Naive thymus-derived CD4-positive, alpha-beta T cell (primary cell): ENCODE measurements at regions of chr1 and their contacts with region 1.

Region 1: GRCh38 chr1:221117548-221117951 is 238.3 kb downstream of the HLX start:
- DNase-seq: no peak
- ATAC-seq: no peak
- H3K4me3 ChIP-seq: no peak overlapping the region
- H3K4me3 Mint-ChIP-seq: no peak overlapping the region
- H3K27ac ChIP-seq: no peak overlapping the region
- H3K27ac Mint-ChIP-seq: no peak overlapping the region
- H3K4me1 ChIP-seq: no peaks in the 10 kb centered on the region
- H3K4me1 Mint-ChIP-seq: no peaks in the 10 kb centered on the region
- H3K27me3 ChIP-seq: no peaks in the 10 kb centered on the region
- H3K27me3 Mint-ChIP-seq: peaks cover 0 to 18% (median 9%) of the 10 kb centered on the region in 5 donors

Region 2: DNA sequence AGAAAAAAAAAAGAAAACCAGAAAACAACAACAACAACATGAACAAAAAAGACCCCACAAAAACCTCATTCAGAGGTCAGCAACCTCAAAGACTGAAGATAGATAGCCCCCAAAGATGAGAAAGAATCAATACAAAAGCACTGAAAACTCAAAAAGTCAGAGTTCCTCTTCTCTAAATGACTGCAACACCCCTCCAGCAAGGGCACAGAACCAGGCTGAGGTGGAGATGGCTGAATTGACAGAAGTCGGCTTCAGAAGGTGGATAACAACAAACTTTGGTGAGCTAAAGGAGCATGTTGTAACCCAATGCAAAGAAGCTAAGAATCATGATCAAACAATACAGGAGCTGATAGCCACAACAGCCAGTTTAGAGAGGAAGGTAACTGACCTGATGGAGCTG is 862.3 kb before region 1 on chr1:
- CTCF ChIA-PET with region 1: no interaction called
- POLR2A ChIA-PET with region 1: no interaction called
- intact Hi-C with region 1: no loop called
- DNase-seq: no peak
- ATAC-seq: no peak
- H3K4me3 ChIP-seq: no peak overlapping the region
- H3K4me3 Mint-ChIP-seq: no peak overlapping the region
- H3K27ac ChIP-seq: no peak overlapping the region
- H3K27ac Mint-ChIP-seq: peak overlapping the region in 2 of 9 donors; percentile 2 to 46
- H3K4me1 ChIP-seq: no peaks in the 10 kb centered on the region
- H3K4me1 Mint-ChIP-seq: peaks cover 26 to 51% (median 43%) of the 10 kb centered on the region in 7 donors
- H3K27me3 ChIP-seq: no peaks in the 10 kb centered on the region
- H3K27me3 Mint-ChIP-seq: no peaks in the 10 kb centered on the region

Region 3: GRCh38 chr1:220974431-220974830 is 143.1 kb before region 1 on chr1:
- CTCF ChIA-PET with region 1: no interaction called
- POLR2A ChIA-PET with region 1: no interaction called
- intact Hi-C with region 1: no loop called
- DNase-seq: no peak
- ATAC-seq: no peak
- H3K4me3 ChIP-seq: no peak overlapping the region
- H3K4me3 Mint-ChIP-seq: no peak overlapping the region
- H3K27ac ChIP-seq: no peak overlapping the region
- H3K27ac Mint-ChIP-seq: no peak overlapping the region
- H3K4me1 ChIP-seq: no peaks in the 10 kb centered on the region
- H3K4me1 Mint-ChIP-seq: no peaks in the 10 kb centered on the region
- H3K27me3 ChIP-seq: no peaks in the 10 kb centered on the region
- H3K27me3 Mint-ChIP-seq: peaks cover 0 to under 1% (median 0%) of the 10 kb centered on the region in 5 donors

Region 4: GRCh38 chr1:221011145-221011544 is 106.4 kb before region 1 on chr1:
- CTCF ChIA-PET with region 1: no interaction called
- POLR2A ChIA-PET with region 1: no interaction called
- intact Hi-C with region 1: no loop called
- DNase-seq: no peak
- ATAC-seq: no peak
- H3K4me3 ChIP-seq: no peak overlapping the region
- H3K4me3 Mint-ChIP-seq: no peak overlapping the region
- H3K27ac ChIP-seq: no peak overlapping the region
- H3K27ac Mint-ChIP-seq: no peak overlapping the region
- H3K4me1 ChIP-seq: no peaks in the 10 kb centered on the region
- H3K4me1 Mint-ChIP-seq: peaks cover 0 to 1% (median 0%) of the 10 kb centered on the region in 7 donors
- H3K27me3 ChIP-seq: no peaks in the 10 kb centered on the region
- H3K27me3 Mint-ChIP-seq: peaks cover 0 to 10% (median 5%) of the 10 kb centered on the region in 5 donors

Region 5: GRCh38 chr1:221161571-221162041 is 44.1 kb after region 1 on chr1:
- CTCF ChIA-PET with region 1: no interaction called
- POLR2A ChIA-PET with region 1: no interaction called
- intact Hi-C with region 1: loop called in 1 of 2 experiments (anchors 1 kb)
- DNase-seq: no peak
- ATAC-seq: no peak
- H3K4me3 ChIP-seq: no peak overlapping the region
- H3K4me3 Mint-ChIP-seq: no peak overlapping the region
- H3K27ac ChIP-seq: no peak overlapping the region
- H3K27ac Mint-ChIP-seq: no peak overlapping the region
- H3K4me1 ChIP-seq: no peaks in the 10 kb centered on the region
- H3K4me1 Mint-ChIP-seq: peaks cover 0 to 1% (median 0%) of the 10 kb centered on the region in 7 donors
- H3K27me3 ChIP-seq: no peaks in the 10 kb centered on the region
- H3K27me3 Mint-ChIP-seq: peaks cover 0 to 25% (median 15%) of the 10 kb centered on the region in 5 donors